ENCODE measurements at regions of chr4 and their contacts with region 1.

Region 1: DNA sequence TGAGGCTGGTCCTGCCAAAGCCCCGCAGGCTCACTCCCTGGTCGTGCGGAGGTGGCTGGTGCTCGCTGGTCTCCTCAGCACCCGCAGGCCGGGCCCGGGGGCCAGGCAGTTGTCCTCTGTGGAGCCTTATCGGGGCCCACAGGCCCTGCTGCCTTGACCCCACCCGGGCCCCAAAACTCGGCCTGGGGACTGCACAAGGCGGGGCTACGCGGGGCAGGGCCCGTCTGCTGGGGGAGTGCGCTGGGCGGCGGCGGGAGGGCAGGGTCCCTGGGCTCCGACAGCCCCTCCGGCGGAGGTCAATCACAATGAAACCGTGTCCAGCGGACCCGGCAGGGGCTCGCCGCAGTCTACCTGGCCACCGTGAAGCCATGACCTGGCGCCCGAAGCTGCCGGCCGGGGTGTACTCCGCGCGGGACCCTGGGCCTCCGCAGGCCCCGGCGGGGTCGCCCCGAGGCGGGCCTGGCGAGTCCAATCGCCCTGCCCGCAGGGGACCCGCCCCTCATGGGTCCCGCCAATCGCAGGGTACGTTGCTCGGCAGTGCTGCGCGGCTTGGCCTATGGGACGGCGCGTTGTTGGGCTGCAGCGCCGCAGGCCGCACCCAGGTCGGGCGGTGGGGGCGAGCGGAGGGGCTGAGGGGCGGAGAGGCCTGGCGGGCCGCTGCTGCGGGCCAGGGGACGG is at the start of gene ADD1:
- DNase-seq: peak; percentile 95
- H3K4me3 Mint-ChIP-seq: peak within 1 kb of the TSS; percentile 89
- H3K27ac Mint-ChIP-seq: peak within 1 kb of the TSS; percentile 82
- H3K4me1 Mint-ChIP-seq: peaks cover 36% of the 10 kb centered on the region
- H3K27me3 Mint-ChIP-seq: no peaks in the 10 kb centered on the region
- total RNA-seq, gene ADD1: 240 and 242 TPM in 2 replicates

Region 2: GRCh38 chr4:2755837-2756694 is 87.3 kb before region 1 on chr4 and contains the start of gene TNIP2:
- intact Hi-C with region 1: loop called (anchors 2 kb)
- DNase-seq: peak; percentile 79
- H3K4me3 Mint-ChIP-seq: peak within 1 kb of the TSS; percentile 88
- H3K27ac Mint-ChIP-seq: peak within 1 kb of the TSS; percentile 70
- H3K4me1 Mint-ChIP-seq: peaks cover 19% of the 10 kb centered on the region
- H3K27me3 Mint-ChIP-seq: no peaks in the 10 kb centered on the region
- total RNA-seq, gene TNIP2: 69.2 and 72.1 TPM in 2 replicates

Region 3: GRCh38 chr4:2954358-2955185 is 111.2 kb after region 1 on chr4:
- intact Hi-C with region 1: loop called (anchors 2 kb)
- DNase-seq: peak; percentile 57
- H3K4me3 Mint-ChIP-seq: peak overlapping the region; percentile 74
- H3K27ac Mint-ChIP-seq: peak overlapping the region; percentile 92
- H3K4me1 Mint-ChIP-seq: peaks cover 63% of the 10 kb centered on the region
- H3K27me3 Mint-ChIP-seq: no peaks in the 10 kb centered on the region

Measured in activated T-helper 2 cell treated with anti-CD3 and anti-CD28 coated beads, Interferon-gamma antibody, Interleukin-2, Interleukin-4, amounts not matched to agents 10 μg/mL and 5 μg/mL and 100 μg/mL, durations not matched to agents 14 hours and 24 hours and 36 hours (primary cell).